Transverse colon (tissue), 4 donors: ENCODE measurements at regions of chr15 and their contacts with region 1.

Region 1: GRCh38 chr15:84955089-84955848 is 26.4 kb upstream of the PDE8A start:
- DNase-seq: peak; percentile 78
- H3K4me3 ChIP-seq: peak overlapping the region in 2 of 4 donors; percentile 5 to 33
- H3K27ac ChIP-seq: no peak overlapping the region
- H3K4me1 ChIP-seq: peaks cover 0 to 7% (median 3%) of the 10 kb centered on the region in 4 donors
- H3K27me3 ChIP-seq: no peaks in the 10 kb centered on the region
- CTCF ChIP-seq: peak; percentile 84 to 93 (median 86)
- EP300 ChIP-seq: no peak
- POLR2A ChIP-seq: no peak

Region 2: GRCh38 chr15:84871428-84872305 is 83.6 kb before region 1 on chr15:
- in situ Hi-C with region 1: no loop called
- intact Hi-C with region 1: no loop called
- DNase-seq: no peak
- H3K4me3 ChIP-seq: no peak overlapping the region
- H3K27ac ChIP-seq: no peak overlapping the region
- H3K4me1 ChIP-seq: no peaks in the 10 kb centered on the region
- H3K27me3 ChIP-seq: no peaks in the 10 kb centered on the region
- CTCF ChIP-seq: no peak
- EP300 ChIP-seq: no peak
- POLR2A ChIP-seq: no peak

Region 3: GRCh38 chr15:85125056-85125661 is 169.9 kb after region 1 on chr15:
- in situ Hi-C with region 1: loop called in 1 of 4 experiments (anchors 25 kb)
- intact Hi-C with region 1: no loop called
- DNase-seq: no peak
- H3K4me3 ChIP-seq: no peak overlapping the region
- H3K27ac ChIP-seq: no peak overlapping the region
- H3K4me1 ChIP-seq: no peaks in the 10 kb centered on the region
- H3K27me3 ChIP-seq: no peaks in the 10 kb centered on the region
- CTCF ChIP-seq: no peak
- EP300 ChIP-seq: no peak
- POLR2A ChIP-seq: no peak